ENCODE measurements at regions of chr9 and their contacts with region 1.

Region 1: GRCh38 chr9:16133556-16134227 is 580.8 kb downstream of the CCDC171 start:
- DNase-seq: peak in 3 of 10 donors; percentile 48 to 84 (median 51)

Region 2: DNA sequence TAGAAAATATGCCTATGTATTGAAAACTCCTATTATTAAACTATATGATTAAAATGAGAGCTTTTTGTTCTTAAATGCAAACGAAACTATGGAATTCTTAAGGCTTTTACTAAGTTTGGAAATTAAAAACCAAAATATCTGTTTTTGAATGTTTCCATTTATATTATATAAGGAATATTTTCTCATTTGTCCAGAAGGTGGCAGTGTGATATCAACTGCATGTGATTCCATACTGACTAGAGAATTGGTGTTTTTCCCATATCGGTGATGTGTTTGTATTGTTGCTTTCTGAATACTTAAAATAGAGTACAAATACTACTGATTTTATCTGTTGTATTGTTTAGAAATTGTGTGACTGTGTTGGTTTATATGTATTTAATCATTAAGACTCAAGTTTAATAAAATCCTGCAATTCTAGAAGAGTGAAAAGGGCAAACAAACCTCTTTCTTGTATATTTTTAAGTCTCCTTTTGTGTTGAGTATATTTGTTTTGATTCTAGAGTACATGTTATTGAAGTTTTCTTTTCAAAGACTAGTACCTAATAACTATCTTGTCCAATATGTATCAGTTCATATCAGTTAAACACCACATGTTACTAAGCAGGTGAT is 260.0 kb before region 1 on chr9:
- intact Hi-C with region 1: loop called (anchors 2 kb)
- DNase-seq: no peak

Region 3: GRCh38 chr9:16221366-16221765 is 87.7 kb after region 1 on chr9:
- intact Hi-C with region 1: no loop called
- DNase-seq: peak in 1 of 10 donors; percentile 28